Lower leg skin (tissue), 4 donors: ENCODE measurements at regions of chr19 and their contacts with region 1.

Region 1: DNA sequence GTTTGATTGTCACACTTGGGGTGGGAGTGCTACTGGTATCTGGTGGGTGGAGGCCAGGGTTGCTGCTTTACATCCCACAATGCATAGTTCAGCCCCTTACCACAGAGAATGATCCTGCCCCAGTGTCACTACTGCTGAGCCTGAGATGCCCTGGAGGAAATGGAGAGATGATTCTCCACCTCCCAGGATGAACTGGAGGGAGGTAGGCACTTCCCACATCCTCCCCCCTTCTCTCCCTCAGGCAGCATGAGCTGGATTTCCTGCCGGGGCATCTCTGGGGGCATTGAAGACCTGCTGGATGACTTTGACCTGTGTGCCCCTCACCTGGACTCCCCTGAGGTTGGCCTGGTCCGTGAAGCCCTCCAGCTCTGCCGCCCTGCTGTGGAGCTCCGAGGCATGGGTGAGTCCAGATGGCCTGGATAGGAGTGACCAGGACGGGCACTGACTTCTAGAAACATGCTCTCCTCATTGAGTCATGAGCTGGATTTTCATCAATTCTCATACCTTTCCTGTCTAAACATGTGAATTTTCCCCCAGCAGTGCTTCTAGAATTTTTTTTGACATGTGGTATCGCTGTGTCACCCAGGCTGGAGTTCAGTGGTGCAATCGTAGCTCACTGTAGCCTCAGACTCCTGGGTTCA is 45.3 kb downstream of the NWD1 start:
- DNase-seq: no peak
- H3K4me3 ChIP-seq: no peak overlapping the region
- CTCF ChIP-seq: no peak
- POLR2A ChIP-seq: no peak

Region 2: GRCh38 chr19:17195106-17195505 is 430.2 kb after region 1 on chr19:
- intact Hi-C with region 1: loop called (anchors 10 kb)
- DNase-seq: no peak
- H3K4me3 ChIP-seq: no peak overlapping the region
- CTCF ChIP-seq: no peak
- POLR2A ChIP-seq: no peak